ENCODE measurements at regions of chr3 and their contacts with region 1.

Region 1: GRCh38 chr3:56702490-56703315 is 19.6 kb upstream of the TASOR start:
- DNase-seq: peak; percentile 84
- ATAC-seq: peak; percentile 88
- H3K4me3 ChIP-seq: no peak overlapping the region
- H3K27ac ChIP-seq: no peak overlapping the region
- H3K4me1 ChIP-seq: no peaks in the 10 kb centered on the region
- H3K27me3 ChIP-seq: no peaks in the 10 kb centered on the region
- CTCF ChIP-seq: peak; percentile 93

Region 2: DNA sequence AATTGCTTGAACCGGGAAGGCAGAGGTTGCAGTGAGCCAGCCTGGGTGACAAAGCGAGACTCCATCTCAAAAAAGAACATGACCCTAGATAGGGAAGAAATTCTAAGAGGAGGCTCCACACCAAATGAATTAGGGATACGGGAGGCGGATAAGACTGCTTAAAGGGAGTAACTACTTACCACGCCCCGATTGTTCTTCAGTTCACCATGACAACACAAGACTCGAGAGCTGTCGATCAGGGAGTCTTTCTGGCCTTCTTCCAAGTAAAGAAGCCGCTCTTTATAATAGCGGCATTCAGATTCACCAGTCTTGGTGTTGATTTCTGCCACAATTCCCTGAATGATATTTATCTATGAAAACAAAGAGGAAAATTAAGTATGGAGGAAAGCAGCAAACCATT is 34.3 kb after region 1 on chr3:
- CTCF ChIA-PET with region 1: no interaction called
- POLR2A ChIA-PET with region 1: no interaction called
- intact Hi-C with region 1: no loop called
- DNase-seq: no peak
- ATAC-seq: no peak
- H3K4me3 ChIP-seq: no peak overlapping the region
- H3K27ac ChIP-seq: no peak overlapping the region
- H3K4me1 ChIP-seq: no peaks in the 10 kb centered on the region
- H3K27me3 ChIP-seq: no peaks in the 10 kb centered on the region
- CTCF ChIP-seq: no peak

Region 3: GRCh38 chr3:56758539-56758981 is 55.9 kb after region 1 on chr3:
- CTCF ChIA-PET with region 1: no interaction called
- POLR2A ChIA-PET with region 1: no interaction called
- intact Hi-C with region 1: loop called (anchors 2 kb)
- DNase-seq: peak; percentile 84
- ATAC-seq: peak; percentile 98
- H3K4me3 ChIP-seq: no peak overlapping the region
- H3K27ac ChIP-seq: peak overlapping the region; percentile 18
- H3K4me1 ChIP-seq: peaks cover 10% of the 10 kb centered on the region
- H3K27me3 ChIP-seq: no peaks in the 10 kb centered on the region
- CTCF ChIP-seq: no peak

Region 4: GRCh38 chr3:56783644-56784447 is 81.1 kb after region 1 on chr3:
- CTCF ChIA-PET with region 1: interaction called, 3 read pairs
- POLR2A ChIA-PET with region 1: no interaction called
- intact Hi-C with region 1: loop called (anchors 1 kb)
- DNase-seq: peak; percentile 97
- ATAC-seq: peak; percentile 95
- H3K4me3 ChIP-seq: no peak overlapping the region
- H3K27ac ChIP-seq: peak overlapping the region; percentile 35
- H3K4me1 ChIP-seq: peaks cover 23% of the 10 kb centered on the region
- H3K27me3 ChIP-seq: no peaks in the 10 kb centered on the region
- CTCF ChIP-seq: no peak

Region 5: DNA sequence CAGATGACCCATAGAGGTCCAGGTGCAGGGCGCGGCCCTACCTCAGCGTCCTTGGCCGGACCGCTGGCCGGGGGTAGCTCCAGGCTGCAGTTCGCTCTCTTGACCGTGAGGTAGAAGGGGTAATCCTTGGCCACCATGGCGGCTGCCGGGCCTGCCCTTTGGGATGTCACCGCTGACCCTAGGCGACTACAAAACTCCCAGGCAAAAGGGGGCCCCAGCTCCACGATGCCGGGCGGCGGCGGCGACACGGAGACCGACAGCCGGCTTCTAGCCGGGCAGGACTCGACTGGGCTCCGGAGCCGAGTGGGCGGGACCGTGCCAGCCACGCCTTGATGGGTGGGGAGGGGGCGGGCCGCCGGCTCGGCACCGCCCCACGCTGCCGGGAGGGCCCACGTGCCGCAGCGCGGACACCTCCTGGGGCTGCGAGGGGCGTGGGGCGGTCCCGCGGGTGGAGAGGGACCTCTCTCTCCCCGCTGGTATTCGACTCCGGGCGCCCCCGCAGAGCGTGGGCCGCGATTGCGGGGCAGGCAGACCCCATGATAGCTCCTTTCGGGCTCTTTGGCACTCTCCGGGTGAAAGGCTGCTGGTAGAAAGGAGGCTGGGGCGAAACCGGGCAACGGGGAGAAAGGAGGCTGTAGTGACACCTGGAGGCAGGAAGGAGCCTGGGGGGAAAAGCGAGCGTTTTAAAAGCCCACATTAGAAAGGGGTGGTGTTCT is 99.1 kb after region 1 on chr3 and contains the start of gene ARHGEF3:
- CTCF ChIA-PET with region 1: interaction called, 13 read pairs
- POLR2A ChIA-PET with region 1: no interaction called
- intact Hi-C with region 1: loop called (anchors 1 kb)
- DNase-seq: peak; percentile 88
- ATAC-seq: peak; percentile 91
- H3K4me3 ChIP-seq: peak within 1 kb of the TSS; percentile 73
- H3K27ac ChIP-seq: 0 out of 2 replicates have a peak within 1 kb of the TSS, but pooled peaks have one; percentile 31
- H3K4me1 ChIP-seq: peaks cover 21% of the 10 kb centered on the region
- H3K27me3 ChIP-seq: no peaks in the 10 kb centered on the region
- CTCF ChIP-seq: peak; percentile 71
- total RNA-seq, gene ARHGEF3: 8.7 and 12.6 TPM in 2 replicates

Region 6: GRCh38 chr3:56878074-56878473 is 175.4 kb after region 1 on chr3:
- CTCF ChIA-PET with region 1: no interaction called
- POLR2A ChIA-PET with region 1: no interaction called
- intact Hi-C with region 1: loop called (anchors 10 kb)
- DNase-seq: no peak
- ATAC-seq: no peak
- H3K4me3 ChIP-seq: no peak overlapping the region
- H3K27ac ChIP-seq: no peak overlapping the region
- H3K4me1 ChIP-seq: peaks cover 25% of the 10 kb centered on the region
- H3K27me3 ChIP-seq: no peaks in the 10 kb centered on the region
- CTCF ChIP-seq: no peak

Region 7: GRCh38 chr3:56980798-56981390 is 278.2 kb after region 1 on chr3:
- CTCF ChIA-PET with region 1: interaction called, 3 read pairs
- POLR2A ChIA-PET with region 1: no interaction called
- intact Hi-C with region 1: loop called (anchors 2 kb)
- DNase-seq: peak; percentile 95
- ATAC-seq: peak; percentile 97
- H3K4me3 ChIP-seq: no peak overlapping the region
- H3K27ac ChIP-seq: peak overlapping the region; percentile 65
- H3K4me1 ChIP-seq: peaks cover 16% of the 10 kb centered on the region
- H3K27me3 ChIP-seq: no peaks in the 10 kb centered on the region
- CTCF ChIP-seq: no peak